ENCODE measurements at regions of chr6 and their contacts with region 1.

Region 1: DNA sequence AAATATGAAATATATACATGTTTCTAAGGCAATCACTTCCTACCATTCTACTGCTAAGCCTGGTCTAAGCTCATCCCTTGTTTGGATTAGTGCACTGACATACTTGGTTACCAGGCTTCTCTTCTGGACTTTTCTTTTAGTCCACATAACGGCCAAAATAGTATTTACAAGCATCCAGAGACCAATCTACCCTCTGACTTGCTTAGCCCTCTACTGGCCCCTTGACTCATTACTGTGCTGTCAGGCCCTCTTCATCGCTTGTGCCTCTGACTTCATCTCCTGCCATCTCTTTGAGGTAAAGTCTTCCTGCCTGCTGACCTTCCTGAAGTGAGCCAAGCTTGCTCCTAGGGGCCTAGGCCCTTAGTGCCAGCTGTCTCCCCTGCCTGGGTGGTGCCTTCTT is 35.1 kb downstream of the TULP4 start:
- DNase-seq: no peak
- ATAC-seq: peak; percentile 25
- H3K4me3 Mint-ChIP-seq: no peak overlapping the region
- H3K27ac Mint-ChIP-seq: no peak overlapping the region
- H3K4me1 Mint-ChIP-seq: peaks cover 8% of the 10 kb centered on the region
- H3K27me3 Mint-ChIP-seq: no peaks in the 10 kb centered on the region
- CTCF ChIP-seq: no peak

Region 2: DNA sequence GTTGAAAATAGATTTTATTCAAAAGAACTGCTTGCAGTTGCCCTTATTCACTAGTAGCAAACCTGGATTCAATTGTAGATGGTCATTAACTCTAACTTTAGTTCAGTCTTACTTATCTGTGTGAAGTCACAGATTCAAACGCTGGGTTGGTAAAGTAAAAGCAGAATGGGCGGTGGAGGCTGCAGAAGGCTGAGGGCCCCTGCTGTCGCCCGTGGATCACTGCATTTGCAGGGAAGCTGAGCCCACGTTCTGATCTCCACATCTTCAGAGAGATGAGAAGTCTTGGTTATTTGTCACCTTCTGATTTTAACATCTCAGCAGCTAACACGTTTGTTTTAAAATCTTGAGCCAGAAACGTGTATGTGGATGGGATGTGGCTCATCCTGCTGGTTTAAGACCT is 449.2 kb before region 1 on chr6:
- CTCF ChIA-PET with region 1: no interaction called
- POLR2A ChIA-PET with region 1: no interaction called
- intact Hi-C with region 1: no loop called
- DNase-seq: no peak
- ATAC-seq: no peak
- H3K4me3 Mint-ChIP-seq: no peak overlapping the region
- H3K27ac Mint-ChIP-seq: no peak overlapping the region
- H3K4me1 Mint-ChIP-seq: peaks cover 3% of the 10 kb centered on the region
- H3K27me3 Mint-ChIP-seq: no peaks in the 10 kb centered on the region
- CTCF ChIP-seq: no peak

Region 3: GRCh38 chr6:158361961-158362669 is 14.8 kb after region 1 on chr6:
- CTCF ChIA-PET with region 1: no interaction called
- POLR2A ChIA-PET with region 1: no interaction called
- intact Hi-C with region 1: loop called (anchors 2 kb)
- DNase-seq: no peak
- ATAC-seq: no peak
- H3K4me3 Mint-ChIP-seq: no peak overlapping the region
- H3K27ac Mint-ChIP-seq: no peak overlapping the region
- H3K4me1 Mint-ChIP-seq: peaks cover 18% of the 10 kb centered on the region
- H3K27me3 Mint-ChIP-seq: no peaks in the 10 kb centered on the region
- CTCF ChIP-seq: no peak

Region 4: DNA sequence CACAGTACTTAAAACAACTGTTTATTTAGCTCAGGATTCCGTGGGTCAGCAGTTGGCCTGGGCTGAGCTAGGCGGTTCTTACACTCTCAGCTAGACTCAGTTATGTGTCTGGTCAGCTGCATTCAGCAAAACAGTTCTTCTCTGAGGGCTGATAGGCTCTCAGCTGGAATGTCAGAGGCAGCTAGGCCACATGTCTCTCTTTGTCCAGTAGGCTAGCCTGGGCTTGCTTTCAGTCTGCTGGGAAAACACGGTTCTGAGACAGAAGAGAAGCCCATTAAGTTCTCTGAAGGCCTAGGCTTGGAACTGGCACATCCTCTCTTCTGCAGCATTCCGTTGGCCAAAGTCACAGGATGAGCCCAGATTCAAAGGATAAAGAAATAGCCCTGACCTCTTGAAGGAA is 30.5 kb after region 1 on chr6:
- CTCF ChIA-PET with region 1: no interaction called
- POLR2A ChIA-PET with region 1: no interaction called
- intact Hi-C with region 1: no loop called
- DNase-seq: no peak
- ATAC-seq: no peak
- H3K4me3 Mint-ChIP-seq: no peak overlapping the region
- H3K27ac Mint-ChIP-seq: no peak overlapping the region
- H3K4me1 Mint-ChIP-seq: peaks cover 32% of the 10 kb centered on the region
- H3K27me3 Mint-ChIP-seq: no peaks in the 10 kb centered on the region
- CTCF ChIP-seq: no peak

Measured in activated B cell treated with CpG ODN at 0.5 μM for 24 hours (primary cell).